ENCODE measurements at regions of chr12 and their contacts with region 1.

Region 1: GRCh38 chr12:122980183-122981046 is at the start of gene ARL6IP4:
- DNase-seq: peak; percentile 54
- ATAC-seq: peak; percentile 69
- H3K4me3 ChIP-seq: peak within 1 kb of the TSS; percentile 85
- H3K27ac ChIP-seq: peak within 1 kb of the TSS; percentile 89
- H3K4me1 ChIP-seq: peaks cover 32% of the 10 kb centered on the region
- H3K27me3 ChIP-seq: no peaks in the 10 kb centered on the region
- CTCF ChIP-seq: no peak
- POLR2A ChIP-seq: peak; percentile 54; the same call in 1 of the 2 replicates
- RAD21 ChIP-seq: no peak; the same call in 1 of the 2 replicates
- total RNA-seq, gene ARL6IP4: 161 and 205 TPM in 2 replicates

Region 2: GRCh38 chr12:123141615-123142517 is 161.5 kb after region 1 on chr12:
- CTCF ChIA-PET with region 1: no interaction called
- POLR2A ChIA-PET with region 1: no interaction called
- dilution Hi-C with region 1: no loop called
- in situ Hi-C with region 1: loop called (anchors 10 kb)
- intact Hi-C with region 1: no loop called
- DNase-seq: peak; percentile 84
- ATAC-seq: peak; percentile 88
- H3K4me3 ChIP-seq: no peak overlapping the region
- H3K27ac ChIP-seq: peak overlapping the region; percentile 35
- H3K4me1 ChIP-seq: peaks cover 33% of the 10 kb centered on the region
- H3K27me3 ChIP-seq: no peaks in the 10 kb centered on the region
- CTCF ChIP-seq: no peak
- POLR2A ChIP-seq: no peak
- RAD21 ChIP-seq: no peak; the same call in 1 of the 2 replicates

Region 3: DNA sequence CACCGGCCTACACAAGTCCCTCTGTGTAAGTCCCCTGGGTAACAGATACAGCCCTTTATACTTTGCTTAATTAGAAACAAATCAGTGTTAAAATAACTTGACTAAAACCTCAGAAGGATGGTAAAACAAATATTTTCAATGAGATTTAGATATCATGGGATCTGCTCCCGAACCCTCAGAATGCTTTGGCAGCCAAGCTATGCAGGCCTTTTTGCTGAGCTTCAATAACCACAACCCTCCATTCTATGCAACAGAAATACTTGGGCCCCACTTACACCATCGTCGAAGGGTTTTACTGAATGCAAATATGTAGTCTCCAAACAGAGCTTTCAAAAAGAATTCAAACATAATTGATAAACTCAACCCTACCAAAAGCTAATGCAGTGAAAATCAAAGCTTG is 199.8 kb after region 1 on chr12:
- CTCF ChIA-PET with region 1: no interaction called
- POLR2A ChIA-PET with region 1: no interaction called
- dilution Hi-C with region 1: no loop called
- in situ Hi-C with region 1: no loop called
- intact Hi-C with region 1: no loop called
- DNase-seq: no peak
- ATAC-seq: no peak
- H3K4me3 ChIP-seq: no peak overlapping the region
- H3K27ac ChIP-seq: no peak overlapping the region
- H3K4me1 ChIP-seq: no peaks in the 10 kb centered on the region
- H3K27me3 ChIP-seq: no peaks in the 10 kb centered on the region
- CTCF ChIP-seq: no peak
- POLR2A ChIP-seq: no peak
- RAD21 ChIP-seq: no peak

Region 4: DNA sequence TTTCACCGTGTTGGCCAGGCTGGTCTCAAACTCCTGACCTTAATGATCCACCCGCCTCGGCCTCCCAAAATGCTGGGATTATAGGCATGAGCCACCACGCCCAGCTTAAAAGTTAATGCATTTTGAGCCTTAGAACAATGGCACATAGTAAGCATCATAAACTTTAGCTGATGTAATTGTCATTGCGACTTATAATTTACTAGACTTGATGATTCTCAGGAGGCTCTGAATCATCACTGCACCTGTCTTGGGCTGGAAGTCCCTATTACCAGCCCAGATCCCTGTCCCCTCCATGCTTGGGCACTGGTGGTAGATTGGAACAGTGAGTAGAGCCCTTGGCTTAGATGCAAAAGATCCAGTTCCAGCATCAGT is 429.6 kb after region 1 on chr12:
- CTCF ChIA-PET with region 1: no interaction called
- POLR2A ChIA-PET with region 1: no interaction called
- dilution Hi-C with region 1: no loop called
- in situ Hi-C with region 1: no loop called
- intact Hi-C with region 1: no loop called
- DNase-seq: no peak
- ATAC-seq: no peak
- H3K4me3 ChIP-seq: no peak overlapping the region
- H3K27ac ChIP-seq: no peak overlapping the region
- H3K4me1 ChIP-seq: no peaks in the 10 kb centered on the region
- H3K27me3 ChIP-seq: no peaks in the 10 kb centered on the region
- CTCF ChIP-seq: no peak
- POLR2A ChIP-seq: no peak
- RAD21 ChIP-seq: no peak